Dorsolateral prefrontal cortex (tissue), 120 donors: ENCODE measurements at regions of chr16 and their contacts with region 1.

Region 1: GRCh38 chr16:46689365-46690280 is at the start of gene ORC6:
- DNase-seq: peak; percentile 95 to 99 (median 99)
- H3K4me3 ChIP-seq: peak within 1 kb of the TSS; percentile 64 to 100 (median 93)
- H3K27ac ChIP-seq: peak within 1 kb of the TSS; percentile 89 to 100 (median 99)
- H3K27me3 ChIP-seq: no peaks in the 10 kb centered on the region
- CTCF ChIP-seq: peak in 34 of 56 donors; percentile 4 to 43 (median 25)
- total RNA-seq, gene ORC6: 3.2 to 11.8 (median 7.2) TPM

Region 2: DNA sequence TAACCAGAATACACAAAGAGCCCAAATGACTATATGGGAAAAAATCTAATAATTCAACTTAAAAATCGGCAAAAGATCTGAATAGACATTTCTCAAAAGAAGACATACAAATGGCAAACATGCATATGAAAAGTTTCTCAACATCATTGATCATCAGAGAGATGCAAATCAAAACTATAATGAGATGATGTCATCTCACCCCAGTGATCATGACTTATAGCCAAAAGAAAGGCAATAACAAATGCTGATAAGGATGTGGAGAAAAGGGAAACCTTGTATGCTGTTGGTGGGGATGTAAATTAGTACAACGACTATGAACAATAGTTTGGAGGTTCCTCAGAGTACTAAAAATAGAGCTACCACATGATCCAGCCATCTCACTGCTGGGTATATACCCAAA is 176.7 kb before region 1 on chr16:
- intact Hi-C with region 1: no loop called
- DNase-seq: no peak
- H3K4me3 ChIP-seq: no peak overlapping the region
- H3K27ac ChIP-seq: no peak overlapping the region
- H3K27me3 ChIP-seq: peaks cover 0 to 4% (median 0%) of the 10 kb centered on the region in 45 donors
- CTCF ChIP-seq: no peak

Region 3: GRCh38 chr16:46583036-46583435 is 106.6 kb before region 1 on chr16:
- intact Hi-C with region 1: no loop called
- DNase-seq: no peak
- H3K4me3 ChIP-seq: no peak overlapping the region
- H3K27ac ChIP-seq: no peak overlapping the region
- H3K27me3 ChIP-seq: no peaks in the 10 kb centered on the region
- CTCF ChIP-seq: no peak

Region 4: DNA sequence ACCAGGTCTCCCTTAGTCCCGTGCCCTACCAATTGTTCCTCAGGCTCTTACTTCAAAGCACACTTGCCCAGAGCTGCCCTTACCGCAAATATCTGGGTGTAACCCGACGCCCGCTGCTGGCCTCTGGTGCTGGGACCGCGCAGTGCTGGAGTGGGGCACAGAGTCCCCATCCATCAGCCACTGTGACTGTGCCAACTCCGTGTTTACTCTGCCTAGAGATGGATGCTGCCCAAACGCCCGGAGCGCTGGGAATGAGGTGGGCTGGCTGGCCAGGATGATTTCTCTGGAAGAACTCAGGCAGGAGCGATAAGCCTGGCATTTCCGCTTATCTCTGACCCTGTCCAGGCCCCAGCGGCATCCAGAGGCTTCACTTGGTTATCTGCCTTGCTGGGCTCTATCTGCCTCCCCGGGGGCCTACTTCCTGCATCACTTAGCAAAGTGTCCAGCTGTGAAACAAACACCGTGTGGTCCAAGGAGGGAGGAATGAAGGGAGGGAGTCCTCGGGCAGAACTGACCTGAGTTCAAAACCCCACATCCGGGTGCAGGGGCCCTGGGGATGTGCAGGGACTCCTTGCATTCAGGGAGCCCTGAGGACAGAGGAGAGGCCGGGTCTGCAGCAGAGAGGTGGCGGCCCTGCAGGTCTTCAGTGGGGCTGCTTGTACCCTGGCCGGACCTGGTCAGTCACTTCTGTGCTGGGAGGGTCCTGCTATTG is 67.9 kb after region 1 on chr16:
- intact Hi-C with region 1: no loop called
- DNase-seq: peak in 1 of 10 donors; percentile 30
- H3K4me3 ChIP-seq: no peak overlapping the region
- H3K27ac ChIP-seq: no peak overlapping the region
- H3K27me3 ChIP-seq: peaks cover 0 to 4% (median 0%) of the 10 kb centered on the region in 45 donors
- CTCF ChIP-seq: no peak

Region 5: DNA sequence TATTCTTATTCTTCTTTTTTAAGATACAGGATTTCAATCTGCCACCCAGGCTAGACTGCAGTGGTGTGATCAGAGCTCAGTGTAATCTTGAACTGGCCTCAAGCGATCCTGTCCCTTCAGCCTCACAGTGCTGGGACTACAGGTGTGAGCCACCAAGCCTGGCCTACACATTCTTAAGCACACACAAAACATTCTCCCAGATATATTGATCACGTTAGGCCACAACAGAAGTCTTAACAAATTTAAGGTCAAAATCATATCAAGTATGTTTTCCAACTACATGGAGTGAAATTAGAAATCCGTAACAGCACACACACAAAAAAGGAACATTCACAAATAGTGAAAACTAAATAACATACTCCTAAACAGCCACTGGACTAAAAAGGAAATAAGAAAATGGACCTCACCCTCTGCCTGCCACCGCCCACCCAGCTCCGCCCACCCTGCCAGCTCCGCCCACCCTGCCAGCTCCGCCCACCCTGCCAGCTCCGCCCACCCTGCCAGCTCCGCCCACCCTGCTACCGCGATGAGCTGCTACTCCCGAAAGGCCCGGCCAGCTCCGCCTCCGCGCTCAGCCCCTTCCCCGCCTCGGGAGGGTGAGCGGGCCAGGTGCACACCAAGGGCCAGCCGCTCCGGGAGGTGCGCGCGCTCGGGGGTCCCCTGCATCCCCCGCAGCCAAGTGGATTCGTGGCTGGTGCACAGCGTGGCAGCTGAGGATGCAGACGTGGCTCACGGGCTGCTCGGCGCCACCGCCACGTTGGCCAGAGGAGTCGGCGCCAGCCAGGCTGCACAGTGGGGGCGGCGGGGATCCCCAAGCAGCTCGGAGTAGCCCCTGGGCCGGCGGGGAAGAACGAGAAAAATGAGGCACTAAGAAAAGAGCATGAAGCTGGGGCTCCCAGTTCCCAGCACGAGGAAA is 100.1 kb after region 1 on chr16:
- intact Hi-C with region 1: loop called in 1 of 2 experiments (anchors 10 kb)
- DNase-seq: peak; percentile 27 to 81 (median 64)
- H3K4me3 ChIP-seq: peak overlapping the region; percentile 43 to 85 (median 71)
- H3K27ac ChIP-seq: peak overlapping the region in 54 of 59 donors; percentile 1 to 86 (median 64)
- H3K27me3 ChIP-seq: no peaks in the 10 kb centered on the region
- CTCF ChIP-seq: no peak

Region 6: DNA sequence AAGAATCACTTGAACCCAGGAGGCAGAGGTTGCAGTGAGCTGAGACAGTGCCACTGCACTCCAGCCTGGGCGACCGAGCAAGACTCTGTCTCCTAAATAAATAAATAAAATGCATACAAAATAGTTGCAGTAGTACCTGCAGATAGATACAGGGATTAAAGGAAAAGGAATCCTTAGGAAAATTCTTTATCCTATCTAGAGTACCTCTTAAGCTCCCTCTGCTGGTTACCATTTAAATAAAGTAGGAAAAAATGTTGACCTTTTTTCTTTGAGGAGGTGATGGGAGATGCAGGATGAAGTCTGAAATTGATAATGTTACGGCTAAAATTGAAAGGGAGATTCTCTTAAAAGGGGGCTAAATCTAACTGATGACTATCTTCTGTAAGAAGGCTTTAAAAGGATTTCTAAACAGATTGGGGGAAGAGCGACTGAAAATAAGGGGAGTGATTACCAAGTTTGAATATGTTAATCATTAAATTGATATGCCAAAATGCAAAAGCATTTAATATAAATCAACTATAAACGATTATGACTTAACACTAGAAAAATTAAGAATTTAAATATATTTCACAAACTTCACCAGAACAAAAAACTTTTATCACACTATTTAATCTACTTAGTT is 111.9 kb after region 1 on chr16:
- intact Hi-C with region 1: loop called (anchors 10 kb)
- DNase-seq: no peak
- H3K4me3 ChIP-seq: no peak overlapping the region
- H3K27ac ChIP-seq: no peak overlapping the region
- H3K27me3 ChIP-seq: no peaks in the 10 kb centered on the region
- CTCF ChIP-seq: peak in 54 of 56 donors; percentile 14 to 64 (median 43)

Region 7: GRCh38 chr16:46830902-46831647 is 141.5 kb after region 1 on chr16 and contains the start of gene C16orf87:
- intact Hi-C with region 1: loop called (anchors 2 to 5 kb)
- DNase-seq: peak; percentile 82 to 97 (median 95)
- H3K4me3 ChIP-seq: peak within 1 kb of the TSS; percentile 63 to 95 (median 84)
- H3K27ac ChIP-seq: peak within 1 kb of the TSS; percentile 40 to 95 (median 87)
- H3K27me3 ChIP-seq: no peaks in the 10 kb centered on the region
- CTCF ChIP-seq: peak in 14 of 56 donors; percentile 5 to 35 (median 14)
- total RNA-seq, gene C16orf87: 5.9 to 21.2 (median 12.9) TPM

Region 8: GRCh38 chr16:46918861-46919792 is 229.5 kb after region 1 on chr16:
- intact Hi-C with region 1: loop called in 1 of 2 experiments (anchors 10 kb)
- DNase-seq: no peak
- H3K4me3 ChIP-seq: no peak overlapping the region
- H3K27ac ChIP-seq: peak overlapping the region in 56 of 59 donors; percentile 12 to 89 (median 67)
- H3K27me3 ChIP-seq: no peaks in the 10 kb centered on the region
- CTCF ChIP-seq: peak in 9 of 56 donors; percentile 6 to 32 (median 20)